ENCODE measurements at regions of chr17 and their contacts with region 1.

Region 1: DNA sequence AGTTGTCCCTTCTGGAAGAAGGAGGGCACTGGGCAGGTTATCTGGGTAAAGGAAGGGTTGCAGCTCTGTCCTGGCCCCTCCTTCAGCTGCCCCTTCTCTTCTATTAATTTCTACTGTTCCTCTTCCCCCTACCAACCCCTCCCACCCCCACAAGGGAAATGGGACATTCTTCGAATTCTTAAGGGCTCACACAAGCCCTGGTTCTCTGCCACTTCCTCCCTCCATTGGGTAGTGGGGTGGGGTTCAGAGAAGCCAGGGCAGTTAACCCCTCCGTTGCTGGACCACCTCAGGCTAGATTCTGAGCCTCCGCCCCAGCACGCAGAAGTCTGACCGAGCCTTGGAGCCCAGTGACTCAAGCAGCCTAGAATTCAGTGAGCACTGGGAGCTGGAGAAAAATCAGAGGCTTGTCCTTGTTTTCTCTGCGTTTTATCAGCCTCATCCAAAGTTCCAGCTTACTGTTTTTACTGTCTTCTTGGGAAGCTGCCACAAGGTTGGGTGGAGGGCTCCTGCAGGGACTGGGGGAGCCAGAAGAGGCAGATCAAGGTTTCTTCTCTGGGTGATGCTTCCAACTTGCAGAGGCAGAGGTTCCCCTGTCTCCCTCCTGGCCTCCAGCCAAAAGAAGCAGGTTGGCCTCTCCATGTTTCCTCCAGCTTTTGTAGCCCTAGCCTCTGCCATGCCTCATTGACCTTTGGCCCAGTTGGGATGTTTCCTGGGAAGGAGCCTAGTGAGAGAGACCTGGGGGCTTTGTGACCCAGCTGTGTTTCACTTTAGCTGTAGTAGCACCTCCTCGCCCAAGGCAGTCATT is 10.2 kb downstream of the LASP1 start:
- DNase-seq: no peak
- ATAC-seq: peak; percentile 28
- H3K4me3 Mint-ChIP-seq: peak overlapping the region; percentile 80
- H3K27ac Mint-ChIP-seq: peak overlapping the region; percentile 89
- H3K4me1 Mint-ChIP-seq: peaks cover 86% of the 10 kb centered on the region
- H3K27me3 Mint-ChIP-seq: no peaks in the 10 kb centered on the region

Region 2: GRCh38 chr17:38815576-38816193 is 64.4 kb before region 1 on chr17:
- POLR2A ChIA-PET with region 1: no interaction called
- DNase-seq: no peak
- ATAC-seq: peak; percentile 30
- H3K4me3 Mint-ChIP-seq: no peak overlapping the region
- H3K27ac Mint-ChIP-seq: no peak overlapping the region
- H3K4me1 Mint-ChIP-seq: peaks cover 4% of the 10 kb centered on the region
- H3K27me3 Mint-ChIP-seq: no peaks in the 10 kb centered on the region

Region 3: GRCh38 chr17:38893607-38894006 is 13.5 kb after region 1 on chr17:
- POLR2A ChIA-PET with region 1: interaction called, 58 read pairs
- DNase-seq: peak; percentile 68
- ATAC-seq: peak; percentile 53
- H3K4me3 Mint-ChIP-seq: peak overlapping the region; percentile 54
- H3K27ac Mint-ChIP-seq: peak overlapping the region; percentile 81
- H3K4me1 Mint-ChIP-seq: peaks cover 79% of the 10 kb centered on the region
- H3K27me3 Mint-ChIP-seq: no peaks in the 10 kb centered on the region